ENCODE measurements at regions of chr6 and their contacts with region 1.

Region 1: DNA sequence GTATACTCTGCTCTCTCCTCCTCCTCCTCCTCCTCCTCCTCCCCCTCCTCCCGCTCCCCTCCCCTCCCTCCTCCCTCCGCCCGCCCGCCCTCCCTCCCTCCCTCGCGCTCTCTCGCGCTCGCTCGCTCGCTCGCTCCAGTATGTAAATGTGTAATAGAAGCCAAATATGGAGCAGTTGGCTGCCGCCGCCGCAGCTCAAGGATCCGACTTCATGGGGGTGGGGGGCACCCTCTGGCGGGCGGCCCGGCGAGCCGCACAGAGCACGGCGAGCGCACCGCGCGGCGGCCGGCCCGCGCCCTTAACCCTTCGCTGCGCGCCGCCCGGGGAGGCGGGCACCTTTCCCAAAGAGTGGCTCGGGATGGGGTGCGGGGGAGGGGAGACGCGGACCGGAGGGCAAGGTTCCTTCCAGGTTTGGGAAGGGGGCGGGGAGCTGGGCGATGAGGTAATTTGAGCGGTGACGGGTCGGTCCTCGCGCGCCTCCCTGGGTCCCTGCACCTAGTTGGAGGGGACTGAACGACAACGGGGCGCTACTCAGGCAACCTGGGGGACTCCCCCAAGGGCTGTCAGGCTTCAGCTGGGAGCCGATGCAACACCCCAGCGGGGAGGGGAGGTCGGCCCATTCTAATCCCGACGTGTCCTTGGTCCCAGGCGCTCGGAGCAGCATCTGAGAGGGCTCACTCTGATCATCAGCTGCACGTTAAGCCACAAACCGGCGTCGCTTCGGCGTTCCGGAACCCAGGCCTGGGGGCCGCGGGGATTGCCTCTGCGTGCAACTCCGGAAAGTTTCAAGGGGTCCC is 409 bp upstream of the ATXN1 start:
- DNase-seq: peak; percentile 95
- ATAC-seq: peak; percentile 68
- H3K4me3 Mint-ChIP-seq: peak overlapping the region; percentile 100
- H3K27ac Mint-ChIP-seq: peak overlapping the region; percentile 99
- H3K4me1 Mint-ChIP-seq: peaks cover 59% of the 10 kb centered on the region
- H3K27me3 Mint-ChIP-seq: no peaks in the 10 kb centered on the region

Region 2: DNA sequence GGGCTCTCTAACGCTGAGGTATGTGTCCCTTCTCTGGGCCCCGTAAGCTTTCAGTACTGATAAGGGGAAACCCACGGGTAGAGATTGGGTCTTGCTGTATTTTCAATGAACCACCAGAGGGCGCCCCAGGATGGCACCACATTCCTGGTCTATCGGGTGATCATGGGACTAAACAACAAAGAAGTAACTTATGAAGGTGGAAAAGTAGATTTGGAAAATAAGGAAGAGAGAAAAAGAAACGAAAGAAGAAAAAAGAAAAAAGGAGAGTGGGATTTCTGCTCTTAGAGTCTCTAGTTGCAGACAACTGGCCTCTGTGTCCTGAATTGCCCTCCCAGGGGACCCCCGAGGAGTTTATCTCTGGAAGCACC is 429.5 kb before region 1 on chr6:
- CTCF ChIA-PET with region 1: interaction called, 60 read pairs
- DNase-seq: peak; percentile 86
- ATAC-seq: peak; percentile 90
- H3K4me3 Mint-ChIP-seq: no peak overlapping the region
- H3K27ac Mint-ChIP-seq: no peak overlapping the region
- H3K4me1 Mint-ChIP-seq: peaks cover 7% of the 10 kb centered on the region
- H3K27me3 Mint-ChIP-seq: no peaks in the 10 kb centered on the region

Region 3: GRCh38 chr6:16514249-16514648 is 247.4 kb before region 1 on chr6:
- CTCF ChIA-PET with region 1: interaction called, 49 read pairs
- DNase-seq: peak; percentile 53
- ATAC-seq: peak; percentile 52
- H3K4me3 Mint-ChIP-seq: no peak overlapping the region
- H3K27ac Mint-ChIP-seq: peak overlapping the region; percentile 41
- H3K4me1 Mint-ChIP-seq: peaks cover 73% of the 10 kb centered on the region
- H3K27me3 Mint-ChIP-seq: no peaks in the 10 kb centered on the region

Region 4: DNA sequence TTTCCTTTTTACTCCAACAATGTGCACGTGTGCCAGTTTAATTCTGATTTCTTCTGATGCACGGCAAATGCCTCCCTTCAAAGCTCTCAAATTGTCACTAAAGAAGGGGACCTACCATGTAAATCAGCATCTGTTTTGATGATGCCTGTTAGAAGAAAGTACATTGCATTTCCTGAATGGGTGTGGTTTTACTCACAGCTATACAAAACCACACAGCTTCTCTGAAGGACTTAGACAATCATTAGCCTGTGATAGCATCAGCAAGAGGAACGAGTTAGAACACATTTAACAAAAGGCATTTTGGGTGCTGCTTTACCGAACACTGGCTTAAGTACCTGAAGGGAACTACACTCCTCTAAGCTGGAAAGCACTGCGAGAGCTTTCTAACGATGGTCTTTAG is 109.8 kb before region 1 on chr6:
- CTCF ChIA-PET with region 1: interaction called, 19 read pairs
- DNase-seq: no peak
- ATAC-seq: peak; percentile 85
- H3K4me3 Mint-ChIP-seq: peak overlapping the region; percentile 27
- H3K27ac Mint-ChIP-seq: peak overlapping the region; percentile 83
- H3K4me1 Mint-ChIP-seq: peaks cover 57% of the 10 kb centered on the region
- H3K27me3 Mint-ChIP-seq: no peaks in the 10 kb centered on the region

Region 5: GRCh38 chr6:16700202-16700915 is 61.3 kb before region 1 on chr6:
- CTCF ChIA-PET with region 1: interaction called, 52 read pairs
- DNase-seq: peak; percentile 78
- ATAC-seq: peak; percentile 32
- H3K4me3 Mint-ChIP-seq: peak overlapping the region; percentile 81
- H3K27ac Mint-ChIP-seq: peak overlapping the region; percentile 99
- H3K4me1 Mint-ChIP-seq: peaks cover 84% of the 10 kb centered on the region
- H3K27me3 Mint-ChIP-seq: no peaks in the 10 kb centered on the region

Region 6: GRCh38 chr6:16741112-16742016 is 20.3 kb before region 1 on chr6:
- CTCF ChIA-PET with region 1: interaction called, 11 read pairs
- DNase-seq: no peak
- ATAC-seq: peak; percentile 77
- H3K4me3 Mint-ChIP-seq: no peak overlapping the region
- H3K27ac Mint-ChIP-seq: peak overlapping the region; percentile 25
- H3K4me1 Mint-ChIP-seq: peaks cover 63% of the 10 kb centered on the region
- H3K27me3 Mint-ChIP-seq: no peaks in the 10 kb centered on the region